MCF 10A (cell line): ENCODE measurements at regions of chr4 and their contacts with region 1.

Region 1: GRCh38 chr4:52376132-52376704 is 282.9 kb downstream of the USP46 start:
- DNase-seq: peak; percentile 70
- H3K4me3 Mint-ChIP-seq: no peak overlapping the region
- H3K27ac Mint-ChIP-seq: no peak overlapping the region
- H3K4me1 Mint-ChIP-seq: peaks cover 5% of the 10 kb centered on the region
- H3K27me3 Mint-ChIP-seq: peaks cover 33% of the 10 kb centered on the region
- CTCF ChIP-seq: peak; percentile 57

Region 2: GRCh38 chr4:52641854-52642563 is 265.8 kb after region 1 on chr4:
- CTCF ChIA-PET with region 1: no interaction called
- POLR2A ChIA-PET with region 1: no interaction called
- intact Hi-C with region 1: no loop called
- DNase-seq: peak; percentile 77
- H3K4me3 Mint-ChIP-seq: no peak overlapping the region
- H3K27ac Mint-ChIP-seq: peak overlapping the region; percentile 60
- H3K4me1 Mint-ChIP-seq: peaks cover 43% of the 10 kb centered on the region
- H3K27me3 Mint-ChIP-seq: no peaks in the 10 kb centered on the region
- CTCF ChIP-seq: no peak

Region 3: GRCh38 chr4:52665592-52665991 is 289.4 kb after region 1 on chr4:
- CTCF ChIA-PET with region 1: no interaction called
- POLR2A ChIA-PET with region 1: no interaction called
- intact Hi-C with region 1: loop called (anchors 2 kb)
- DNase-seq: peak; percentile 29
- H3K4me3 Mint-ChIP-seq: no peak overlapping the region
- H3K27ac Mint-ChIP-seq: no peak overlapping the region
- H3K4me1 Mint-ChIP-seq: peaks cover 10% of the 10 kb centered on the region
- H3K27me3 Mint-ChIP-seq: no peaks in the 10 kb centered on the region
- CTCF ChIP-seq: peak; percentile 24

Region 4: DNA sequence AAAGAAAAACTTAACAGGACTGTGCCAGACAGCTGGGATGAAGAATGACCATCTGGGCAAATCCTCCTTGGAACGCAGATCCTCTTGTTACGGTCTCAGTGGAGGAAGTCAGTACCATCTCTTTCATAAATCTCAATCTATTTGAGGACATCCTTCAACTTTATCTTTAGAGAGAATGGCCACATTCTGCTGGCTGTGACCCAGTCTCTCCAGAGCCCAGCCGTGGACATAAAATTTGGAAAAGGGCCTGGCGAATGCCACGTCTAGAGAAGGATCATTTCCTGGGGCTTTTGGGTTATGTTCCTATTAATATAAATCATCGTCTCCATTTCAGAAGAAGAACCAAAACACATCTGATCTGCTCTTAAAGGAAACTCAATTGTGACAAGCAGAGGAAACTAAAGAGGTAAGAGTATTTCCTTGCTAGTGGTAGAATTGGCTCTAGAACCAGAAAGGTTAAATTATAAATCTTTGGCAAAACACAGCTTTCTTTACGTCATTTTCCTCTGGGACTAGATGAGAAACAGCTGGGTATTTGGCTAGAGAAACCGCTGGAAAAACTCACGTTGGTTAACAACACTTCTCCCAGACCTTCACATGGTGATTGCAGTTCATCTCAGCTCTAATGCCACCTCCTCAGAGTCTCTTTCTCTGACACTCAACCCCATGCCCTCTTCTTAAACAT is 1523.5 kb after region 1 on chr4:
- CTCF ChIA-PET with region 1: no interaction called
- POLR2A ChIA-PET with region 1: no interaction called
- intact Hi-C with region 1: loop called (anchors 5 kb)
- DNase-seq: no peak
- H3K4me3 Mint-ChIP-seq: no peak overlapping the region
- H3K27ac Mint-ChIP-seq: no peak overlapping the region
- H3K4me1 Mint-ChIP-seq: peaks cover 11% of the 10 kb centered on the region
- H3K27me3 Mint-ChIP-seq: no peaks in the 10 kb centered on the region
- CTCF ChIP-seq: no peak